Naive thymus-derived CD4-positive, alpha-beta T cell (primary cell): ENCODE measurements at regions of chr16 and their contacts with region 1.

Region 1: DNA sequence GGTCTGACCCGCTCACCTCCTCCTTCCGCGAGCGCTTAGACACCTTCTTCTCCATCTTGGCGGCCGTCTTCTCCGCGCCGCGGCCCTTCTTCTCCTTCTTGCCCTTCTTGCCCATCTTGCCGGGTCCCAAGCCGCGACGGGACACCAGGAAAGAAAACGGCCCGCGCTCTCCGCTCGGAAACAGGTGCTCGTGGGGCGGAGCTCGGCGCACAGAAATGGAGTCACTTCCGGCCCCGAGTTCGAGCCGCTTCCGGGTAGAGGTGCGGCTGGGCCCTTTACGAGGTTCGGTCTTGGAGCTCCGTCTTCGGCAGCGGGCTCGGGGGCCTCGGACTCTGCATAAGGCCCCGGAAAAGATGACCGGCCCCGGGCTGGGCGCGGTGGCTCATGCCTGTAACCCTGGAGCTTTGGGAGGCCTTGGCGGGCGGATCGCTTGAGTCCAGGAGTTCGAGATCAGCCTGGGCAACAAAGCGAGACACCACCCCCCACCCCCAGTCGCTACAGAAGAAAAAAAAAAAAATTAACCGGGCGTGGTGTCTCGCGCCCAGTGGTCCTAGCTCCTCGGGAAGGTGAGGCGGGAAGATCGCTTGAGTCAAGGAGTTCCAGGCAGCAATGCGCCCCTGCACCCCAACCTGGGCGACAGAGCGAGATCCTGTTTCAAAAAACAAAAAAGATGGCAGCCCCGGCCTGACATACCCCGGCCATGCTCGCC is at the start of gene KLHDC4:
- DNase-seq: peak; percentile 76 to 91 (median 87)
- ATAC-seq: peak; percentile 76
- H3K4me3 ChIP-seq: peak within 1 kb of the TSS; percentile 71
- H3K4me3 Mint-ChIP-seq: peak within 1 kb of the TSS; percentile 96 to 100 (median 99)
- H3K27ac ChIP-seq: peak within 1 kb of the TSS; percentile 93
- H3K27ac Mint-ChIP-seq: peak within 1 kb of the TSS; percentile 95 to 100 (median 99)
- H3K4me1 ChIP-seq: peaks cover 25 to 45% of the 10 kb centered on the region in 2 donors
- H3K4me1 Mint-ChIP-seq: peaks cover 24 to 51% (median 41%) of the 10 kb centered on the region in 7 donors
- H3K27me3 ChIP-seq: no peaks in the 10 kb centered on the region
- H3K27me3 Mint-ChIP-seq: no peaks in the 10 kb centered on the region
- total RNA-seq, gene KLHDC4: 82.9 to 110 (median 85.3) TPM

Region 2: DNA sequence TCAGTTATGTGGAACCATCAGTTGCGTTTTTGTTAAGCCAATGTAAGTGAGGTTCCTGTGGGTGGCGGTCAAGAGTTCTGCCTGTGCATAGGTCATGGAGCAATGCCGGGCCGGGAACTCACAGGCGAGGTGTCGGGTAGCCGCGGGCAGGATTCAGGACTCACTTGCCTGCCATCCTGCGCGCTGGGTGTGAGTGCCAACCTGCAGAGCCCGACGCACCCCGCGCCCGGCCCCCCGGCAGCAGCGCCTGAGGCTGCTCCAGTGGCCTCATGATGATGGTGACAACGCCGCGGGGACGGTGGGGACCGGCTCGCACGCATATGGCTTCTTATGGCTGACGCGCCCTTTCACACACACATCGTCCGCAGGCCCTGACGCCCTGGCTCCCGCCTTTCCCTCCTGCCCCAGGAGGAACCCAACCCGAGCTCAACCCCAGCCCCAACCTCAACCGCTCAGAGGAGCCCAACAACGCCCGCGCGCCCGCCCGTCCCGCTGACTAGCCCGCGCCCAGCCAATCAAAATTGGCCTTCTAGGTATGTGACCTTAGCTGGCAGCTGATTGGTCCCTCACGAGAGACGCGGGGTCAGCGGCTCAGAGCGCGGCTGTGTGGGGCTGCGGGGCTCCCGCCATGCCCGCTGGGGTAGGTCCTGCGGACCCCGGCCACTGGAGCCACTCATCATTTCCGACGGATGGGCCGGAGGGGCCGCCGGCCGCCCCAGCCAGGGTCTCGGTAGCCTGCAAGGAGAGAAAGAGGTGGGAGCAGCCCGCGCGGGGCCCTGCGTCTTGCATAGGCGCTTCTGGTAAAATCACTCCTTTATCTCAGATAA is 448.8 kb before region 1 on chr16 and contains the start of gene C16orf95:
- CTCF ChIA-PET with region 1: no interaction called
- POLR2A ChIA-PET with region 1: interaction called, 3 read pairs
- intact Hi-C with region 1: loop called (anchors 2 to 5 kb)
- DNase-seq: peak; percentile 93 to 100 (median 96)
- ATAC-seq: peak; percentile 96
- H3K4me3 ChIP-seq: peak within 1 kb of the TSS; percentile 86
- H3K4me3 Mint-ChIP-seq: peak within 1 kb of the TSS; percentile 92 to 100 (median 97)
- H3K27ac ChIP-seq: peak within 1 kb of the TSS; percentile 91
- H3K27ac Mint-ChIP-seq: peak within 1 kb of the TSS; percentile 91 to 99 (median 94)
- H3K4me1 ChIP-seq: peaks cover 8 to 11% of the 10 kb centered on the region in 2 donors
- H3K4me1 Mint-ChIP-seq: peaks cover 11 to 23% (median 16%) of the 10 kb centered on the region in 7 donors
- H3K27me3 ChIP-seq: no peaks in the 10 kb centered on the region
- H3K27me3 Mint-ChIP-seq: peaks cover 0 to 2% (median 0%) of the 10 kb centered on the region in 5 donors
- total RNA-seq, gene C16orf95: 1.3 to 8.6 (median 2.6) TPM

Region 3: GRCh38 chr16:87387942-87388817 is 377.8 kb before region 1 on chr16:
- CTCF ChIA-PET with region 1: no interaction called
- POLR2A ChIA-PET with region 1: interaction called, 5 read pairs
- intact Hi-C with region 1: loop called (anchors 1 to 2 kb)
- DNase-seq: peak; percentile 46 to 95 (median 88)
- ATAC-seq: peak; percentile 75
- H3K4me3 ChIP-seq: peak overlapping the region; percentile 27
- H3K4me3 Mint-ChIP-seq: peak overlapping the region; percentile 27 to 78 (median 68)
- H3K27ac ChIP-seq: peak overlapping the region; percentile 86
- H3K27ac Mint-ChIP-seq: peak overlapping the region; percentile 87 to 99 (median 96)
- H3K4me1 ChIP-seq: peaks cover 17 to 29% of the 10 kb centered on the region in 2 donors
- H3K4me1 Mint-ChIP-seq: peaks cover 15 to 55% (median 44%) of the 10 kb centered on the region in 7 donors
- H3K27me3 ChIP-seq: no peaks in the 10 kb centered on the region
- H3K27me3 Mint-ChIP-seq: peaks cover 0 to 2% (median 0%) of the 10 kb centered on the region in 5 donors

Region 4: DNA sequence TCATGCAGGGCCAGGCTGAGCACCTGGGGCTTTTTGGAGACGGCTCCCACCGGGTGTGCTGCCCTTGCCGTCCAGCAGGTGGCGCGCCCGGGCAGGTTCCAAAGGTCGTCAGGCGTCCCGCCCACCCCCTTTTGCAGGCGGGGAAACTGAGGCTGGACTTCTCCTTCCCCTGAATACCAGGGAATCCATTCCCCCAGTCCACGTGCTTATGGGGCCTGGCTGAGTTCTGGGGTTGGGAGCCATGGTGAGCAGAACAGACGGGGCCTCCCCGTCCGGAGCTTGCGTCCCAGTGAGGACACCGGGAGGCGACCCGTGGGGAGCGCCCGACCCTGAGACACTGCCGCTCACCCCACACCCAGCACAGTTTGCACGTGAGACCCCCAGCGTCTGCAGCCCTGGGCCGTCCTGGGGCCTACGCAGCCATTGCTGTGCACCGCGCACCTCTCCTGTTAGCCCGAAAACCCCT is 215.4 kb before region 1 on chr16:
- CTCF ChIA-PET with region 1: interaction called, 4 read pairs
- POLR2A ChIA-PET with region 1: no interaction called
- intact Hi-C with region 1: loop called in 1 of 2 experiments (anchors 1 kb)
- DNase-seq: peak; percentile 26 to 75 (median 49)
- ATAC-seq: peak; percentile 63
- H3K4me3 ChIP-seq: no peak overlapping the region
- H3K4me3 Mint-ChIP-seq: no peak overlapping the region
- H3K27ac ChIP-seq: no peak overlapping the region
- H3K27ac Mint-ChIP-seq: peak overlapping the region in 1 of 9 donors; percentile 65
- H3K4me1 ChIP-seq: no peaks in the 10 kb centered on the region
- H3K4me1 Mint-ChIP-seq: peaks cover 0 to 11% (median 4%) of the 10 kb centered on the region in 7 donors
- H3K27me3 ChIP-seq: no peaks in the 10 kb centered on the region
- H3K27me3 Mint-ChIP-seq: peaks cover 2 to 31% (median 18%) of the 10 kb centered on the region in 5 donors

Region 5: GRCh38 chr16:87702325-87702811 is 63.6 kb before region 1 on chr16:
- CTCF ChIA-PET with region 1: no interaction called
- POLR2A ChIA-PET with region 1: interaction called, 3 read pairs
- intact Hi-C with region 1: loop called in 1 of 2 experiments (anchors 5 kb)
- DNase-seq: peak in 6 of 9 donors; percentile 21 to 41 (median 36)
- ATAC-seq: peak; percentile 60
- H3K4me3 ChIP-seq: no peak overlapping the region
- H3K4me3 Mint-ChIP-seq: peak overlapping the region; percentile 15 to 84 (median 76)
- H3K27ac ChIP-seq: peak overlapping the region; percentile 57
- H3K27ac Mint-ChIP-seq: peak overlapping the region; percentile 66 to 93 (median 91)
- H3K4me1 ChIP-seq: peaks cover 21 to 31% of the 10 kb centered on the region in 2 donors
- H3K4me1 Mint-ChIP-seq: peaks cover 29 to 55% (median 50%) of the 10 kb centered on the region in 7 donors
- H3K27me3 ChIP-seq: no peaks in the 10 kb centered on the region
- H3K27me3 Mint-ChIP-seq: no peaks in the 10 kb centered on the region

Region 6: GRCh38 chr16:87778830-87779579 is 13.1 kb after region 1 on chr16:
- CTCF ChIA-PET with region 1: interaction called, 27 read pairs
- POLR2A ChIA-PET with region 1: interaction called, 23 read pairs
- intact Hi-C with region 1: loop called in 1 of 2 experiments (anchors 1 kb)
- DNase-seq: peak; percentile 83 to 96 (median 88)
- ATAC-seq: peak; percentile 94
- H3K4me3 ChIP-seq: no peak overlapping the region
- H3K4me3 Mint-ChIP-seq: peak overlapping the region in 9 of 10 donors; percentile 54 to 84 (median 63)
- H3K27ac ChIP-seq: no peak overlapping the region
- H3K27ac Mint-ChIP-seq: peak overlapping the region; percentile 51 to 96 (median 89)
- H3K4me1 ChIP-seq: peaks cover 17 to 33% of the 10 kb centered on the region in 2 donors
- H3K4me1 Mint-ChIP-seq: peaks cover 12 to 62% (median 38%) of the 10 kb centered on the region in 7 donors
- H3K27me3 ChIP-seq: no peaks in the 10 kb centered on the region
- H3K27me3 Mint-ChIP-seq: no peaks in the 10 kb centered on the region

Region 7: GRCh38 chr16:87822108-87822970 is 56.4 kb after region 1 on chr16:
- CTCF ChIA-PET with region 1: no interaction called
- POLR2A ChIA-PET with region 1: no interaction called
- intact Hi-C with region 1: no loop called
- DNase-seq: no peak
- ATAC-seq: no peak
- H3K4me3 ChIP-seq: no peak overlapping the region
- H3K4me3 Mint-ChIP-seq: no peak overlapping the region
- H3K27ac ChIP-seq: no peak overlapping the region
- H3K27ac Mint-ChIP-seq: peak overlapping the region in 4 of 9 donors; percentile 29 to 72 (median 52)
- H3K4me1 ChIP-seq: peaks cover 0 to 8% of the 10 kb centered on the region in 2 donors
- H3K4me1 Mint-ChIP-seq: peaks cover 0 to 17% (median 10%) of the 10 kb centered on the region in 7 donors
- H3K27me3 ChIP-seq: no peaks in the 10 kb centered on the region
- H3K27me3 Mint-ChIP-seq: no peaks in the 10 kb centered on the region

Region 8: DNA sequence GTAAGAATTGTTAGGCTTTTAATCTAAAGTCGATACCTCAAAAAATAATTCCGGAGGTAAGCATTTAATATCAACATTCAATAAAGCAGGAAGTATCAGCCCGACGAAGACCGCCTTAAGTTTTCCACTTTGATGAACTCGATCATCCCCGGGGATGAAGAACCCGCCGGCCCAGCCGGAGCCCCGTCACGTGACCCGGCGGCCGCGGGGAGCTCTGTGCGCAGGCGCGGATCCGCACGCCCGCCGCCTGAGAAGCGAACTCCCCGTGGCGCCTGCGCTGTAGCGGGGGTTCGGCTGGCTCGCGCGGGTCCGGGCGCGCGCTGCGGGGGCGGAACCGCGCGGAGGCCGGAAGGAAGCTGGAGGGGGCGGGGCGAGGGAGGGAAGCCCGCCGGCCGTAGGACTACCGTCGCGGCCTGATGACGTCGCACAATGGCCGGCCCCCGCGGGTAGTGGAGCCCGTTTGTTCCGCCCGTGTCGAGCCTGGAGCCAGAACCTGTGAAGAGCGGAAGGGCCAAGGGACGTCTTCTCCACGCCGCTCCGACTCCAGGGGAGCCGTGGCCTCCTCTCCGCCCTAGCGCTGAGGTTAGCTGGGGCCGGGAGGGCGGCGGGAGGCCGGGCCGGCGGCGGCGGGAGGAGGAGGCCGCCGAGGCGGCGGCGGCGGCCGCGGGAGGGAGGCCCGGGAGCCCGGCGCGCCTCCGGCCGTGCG is 804.2 kb after region 1 on chr16 and contains the start of gene ZC3H18:
- CTCF ChIA-PET with region 1: no interaction called
- POLR2A ChIA-PET with region 1: interaction called, 4 read pairs
- intact Hi-C with region 1: loop called in 1 of 2 experiments (anchors 2 kb)
- DNase-seq: peak; percentile 93 to 99 (median 96)
- ATAC-seq: peak; percentile 99
- H3K4me3 ChIP-seq: peak within 1 kb of the TSS; percentile 84
- H3K4me3 Mint-ChIP-seq: peak within 1 kb of the TSS; percentile 81 to 93 (median 87)
- H3K27ac ChIP-seq: peak within 1 kb of the TSS; percentile 91
- H3K27ac Mint-ChIP-seq: peak within 1 kb of the TSS; percentile 45 to 93 (median 89)
- H3K4me1 ChIP-seq: peaks cover 21% of the 10 kb centered on the region in 2 donors
- H3K4me1 Mint-ChIP-seq: peaks cover 10 to 39% (median 34%) of the 10 kb centered on the region in 7 donors
- H3K27me3 ChIP-seq: no peaks in the 10 kb centered on the region
- H3K27me3 Mint-ChIP-seq: no peaks in the 10 kb centered on the region
- total RNA-seq, gene ZC3H18: 74.0 to 97.8 (median 82.6) TPM